Vagina (tissue), 2 donors: ENCODE measurements at regions of chr14 and their contacts with region 1.

Region 1: DNA sequence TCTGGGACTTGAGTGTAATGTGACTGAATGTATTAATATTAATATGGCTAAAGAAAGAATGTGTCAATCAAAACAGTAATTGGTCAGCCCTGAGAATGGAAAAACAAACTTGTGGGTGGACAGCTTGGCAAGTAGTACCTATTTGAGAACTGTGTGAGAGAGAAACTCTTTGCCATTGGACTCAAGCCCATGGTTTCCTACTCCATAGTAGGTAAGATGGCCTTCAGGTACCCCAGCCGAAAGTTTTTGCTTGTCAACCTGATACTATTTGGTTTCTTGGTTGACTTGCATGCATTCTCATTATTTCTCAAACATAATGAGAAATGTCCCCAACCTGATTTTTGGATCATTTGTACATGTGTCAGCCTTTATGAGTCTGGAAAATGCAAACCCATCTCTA is 391.1 kb downstream of the MDGA2 start:
- DNase-seq: no peak
- H3K4me3 ChIP-seq: no peak overlapping the region
- H3K27ac ChIP-seq: no peak overlapping the region
- H3K4me1 ChIP-seq: no peaks in the 10 kb centered on the region
- H3K27me3 ChIP-seq: no peaks in the 10 kb centered on the region
- CTCF ChIP-seq: no peak
- POLR2A ChIP-seq: no peak

Region 2: GRCh38 chr14:48744202-48744601 is 1459.9 kb after region 1 on chr14:
- intact Hi-C with region 1: loop called (anchors 5 kb)
- DNase-seq: no peak
- H3K4me3 ChIP-seq: no peak overlapping the region
- H3K27ac ChIP-seq: no peak overlapping the region
- H3K4me1 ChIP-seq: no peaks in the 10 kb centered on the region
- H3K27me3 ChIP-seq: no peaks in the 10 kb centered on the region
- CTCF ChIP-seq: no peak
- POLR2A ChIP-seq: no peak